ENCODE measurements at regions of chr3 and their contacts with region 1.

Region 1: DNA sequence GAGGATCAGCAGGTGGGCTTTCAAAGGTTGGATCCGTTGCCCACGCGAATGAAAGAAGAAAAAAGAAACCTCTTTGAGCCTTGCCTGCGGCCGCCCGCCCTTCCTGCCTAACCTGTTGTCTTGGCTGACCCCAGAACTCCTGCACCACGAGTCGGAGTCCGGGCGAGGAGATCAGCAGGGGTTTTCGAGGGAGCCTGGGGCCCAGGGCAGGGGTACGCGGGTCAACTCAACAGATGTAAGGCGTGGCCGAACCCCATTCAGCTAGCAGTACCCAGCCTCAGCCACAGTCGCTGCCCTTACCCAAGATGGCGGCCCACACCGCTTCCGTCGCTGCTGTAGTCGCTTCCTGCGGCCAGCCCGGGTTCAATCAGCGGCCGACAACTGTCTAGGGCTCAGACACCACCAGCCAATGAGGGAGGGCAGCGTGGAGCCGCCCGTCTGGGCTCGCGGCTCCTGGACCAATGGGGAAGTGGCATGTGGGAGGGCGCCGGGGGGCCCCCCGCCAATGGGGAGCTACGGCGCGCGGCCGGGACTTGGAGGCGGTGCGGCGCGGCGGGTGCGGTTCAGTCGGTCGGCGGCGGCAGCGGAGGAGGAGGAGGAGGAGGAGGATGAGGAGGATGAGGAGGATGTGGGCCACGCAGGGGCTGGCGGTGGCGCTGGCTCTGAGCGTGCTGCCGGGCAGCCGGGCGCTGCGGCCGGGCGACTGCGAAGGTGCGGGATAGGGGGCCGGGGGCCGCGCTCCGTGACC is at the start of gene MANF:
- DNase-seq: peak; percentile 98 to 100
- H3K4me3 ChIP-seq: peak within 1 kb of the TSS; percentile 87
- CTCF ChIP-seq: peak in 1 of 3 donors; percentile 6
- POLR2A ChIP-seq: no peak
- total RNA-seq, gene MANF: 36.0 to 58.5 (median 48.2) TPM

Region 2: GRCh38 chr3:50616003-50616769 is 768.7 kb before region 1 on chr3:
- intact Hi-C with region 1: loop called (anchors 5 kb)
- DNase-seq: peak; percentile 82 to 97
- H3K4me3 ChIP-seq: peak overlapping the region; percentile 23
- CTCF ChIP-seq: peak in 1 of 3 donors; percentile 99
- POLR2A ChIP-seq: no peak

Region 3: GRCh38 chr3:51682079-51682478 is 297.2 kb after region 1 on chr3:
- intact Hi-C with region 1: loop called (anchors 10 kb)
- DNase-seq: peak; percentile 82 to 90
- H3K4me3 ChIP-seq: no peak overlapping the region
- CTCF ChIP-seq: peak in 1 of 3 donors; percentile 49
- POLR2A ChIP-seq: no peak

Measured in lower leg skin (tissue), 4 donors.